CD4-positive, alpha-beta memory T cell (primary cell): ENCODE measurements at regions of chr6 and their contacts with region 1.

Region 1: DNA sequence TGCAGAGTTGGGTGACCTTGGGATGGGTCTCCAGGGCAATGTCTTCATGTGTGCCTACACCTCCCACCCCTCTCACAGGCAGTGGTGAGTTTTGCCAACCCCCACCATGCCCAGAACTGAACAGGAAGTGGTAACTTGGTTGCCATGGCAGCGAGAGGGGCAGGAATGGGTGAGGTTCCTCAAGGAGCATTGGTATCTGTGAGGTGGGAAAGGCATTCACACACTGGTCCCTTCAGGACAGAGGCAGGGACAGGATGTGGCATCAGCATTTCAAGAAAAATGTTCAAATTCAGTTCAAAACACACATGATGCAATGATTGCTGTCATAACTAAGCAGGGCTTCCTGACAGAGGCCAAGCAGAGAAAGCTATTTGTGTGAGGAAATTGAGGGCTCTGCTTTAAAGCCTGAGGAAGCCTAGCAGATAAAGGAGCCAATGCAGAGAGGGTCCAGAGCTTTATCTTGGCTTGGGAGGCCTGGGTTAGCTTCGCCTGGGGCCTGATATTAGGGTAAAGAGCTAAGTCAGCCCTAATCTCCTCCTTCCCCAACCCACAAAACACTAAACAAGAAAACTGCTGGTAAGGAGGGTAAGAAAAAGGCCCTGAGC is 551 bp downstream of the TREML2 start:
- DNase-seq: peak; percentile 62 to 79 (median 73)
- H3K4me3 ChIP-seq: peak overlapping the region; percentile 5 to 37
- H3K4me3 Mint-ChIP-seq: peak overlapping the region; percentile 68 to 86 (median 78)
- H3K27ac ChIP-seq: peak overlapping the region; percentile 78
- H3K27ac Mint-ChIP-seq: peak overlapping the region; percentile 94 to 98 (median 97)
- H3K4me1 ChIP-seq: peaks cover 61% of the 10 kb centered on the region
- H3K4me1 Mint-ChIP-seq: peaks cover 51 to 95% (median 65%) of the 10 kb centered on the region in 4 donors
- H3K27me3 ChIP-seq: no peaks in the 10 kb centered on the region
- H3K27me3 Mint-ChIP-seq: no peaks in the 10 kb centered on the region

Region 2: GRCh38 chr6:41182069-41183034 is 18.0 kb before region 1 on chr6:
- CTCF ChIA-PET with region 1: interaction called, 26 read pairs
- POLR2A ChIA-PET with region 1: interaction called, 7 read pairs
- intact Hi-C with region 1: no loop called
- DNase-seq: peak; percentile 47 to 65 (median 56)
- H3K4me3 ChIP-seq: no peak overlapping the region
- H3K4me3 Mint-ChIP-seq: no peak overlapping the region
- H3K27ac ChIP-seq: no peak overlapping the region
- H3K27ac Mint-ChIP-seq: peak overlapping the region in 1 of 7 donors; percentile 2
- H3K4me1 ChIP-seq: peaks cover 7% of the 10 kb centered on the region
- H3K4me1 Mint-ChIP-seq: peaks cover 7 to 14% (median 10%) of the 10 kb centered on the region in 4 donors
- H3K27me3 ChIP-seq: no peaks in the 10 kb centered on the region
- H3K27me3 Mint-ChIP-seq: peaks cover 3 to 6% of the 10 kb centered on the region in 2 donors

Region 3: GRCh38 chr6:41278699-41279405 is 78.5 kb after region 1 on chr6:
- CTCF ChIA-PET with region 1: interaction called, 10 read pairs
- POLR2A ChIA-PET with region 1: no interaction called
- intact Hi-C with region 1: no loop called
- DNase-seq: peak; percentile 55 to 67 (median 60)
- H3K4me3 ChIP-seq: no peak overlapping the region
- H3K4me3 Mint-ChIP-seq: no peak overlapping the region
- H3K27ac ChIP-seq: no peak overlapping the region
- H3K27ac Mint-ChIP-seq: peak overlapping the region in 2 of 7 donors; percentile 32 to 59
- H3K4me1 ChIP-seq: peaks cover 10% of the 10 kb centered on the region
- H3K4me1 Mint-ChIP-seq: peaks cover 4 to 9% (median 8%) of the 10 kb centered on the region in 4 donors
- H3K27me3 ChIP-seq: no peaks in the 10 kb centered on the region
- H3K27me3 Mint-ChIP-seq: peaks cover 10% of the 10 kb centered on the region in 2 donors

Region 4: GRCh38 chr6:41298785-41299502 is 98.5 kb after region 1 on chr6:
- CTCF ChIA-PET with region 1: no interaction called
- POLR2A ChIA-PET with region 1: interaction called, 3 read pairs
- intact Hi-C with region 1: loop called (anchors 2 kb)
- DNase-seq: peak in 4 of 5 donors; percentile 60 to 71 (median 68)
- H3K4me3 ChIP-seq: no peak overlapping the region
- H3K4me3 Mint-ChIP-seq: peak overlapping the region in 7 of 8 donors; percentile 34 to 76 (median 62)
- H3K27ac ChIP-seq: no peak overlapping the region
- H3K27ac Mint-ChIP-seq: peak overlapping the region; percentile 57 to 88 (median 74)
- H3K4me1 ChIP-seq: peaks cover 20% of the 10 kb centered on the region
- H3K4me1 Mint-ChIP-seq: peaks cover 27 to 43% (median 33%) of the 10 kb centered on the region in 4 donors
- H3K27me3 ChIP-seq: no peaks in the 10 kb centered on the region
- H3K27me3 Mint-ChIP-seq: peaks cover 0 to 8% of the 10 kb centered on the region in 2 donors